Caco-2 (cell line): ENCODE measurements at regions of chr13 and their contacts with region 1.

Region 1: DNA sequence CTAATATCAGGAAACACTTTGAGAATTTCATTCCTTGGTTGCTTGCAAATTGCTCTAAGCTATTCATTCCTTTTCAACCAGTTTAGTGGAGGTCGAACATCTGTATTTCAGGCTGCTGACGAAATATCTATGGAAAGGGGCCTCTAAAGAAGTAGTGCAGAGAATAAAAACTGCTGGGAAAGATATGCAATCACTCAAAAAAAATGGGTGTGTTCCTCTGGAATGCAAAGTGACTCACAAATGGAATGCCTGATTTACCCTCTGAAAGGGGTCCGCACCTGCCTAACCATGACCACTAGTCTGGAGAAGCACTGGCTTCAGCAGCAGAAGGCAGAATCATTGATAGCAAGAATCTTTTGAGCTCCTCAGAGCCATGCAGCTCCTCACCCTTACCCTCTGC is 129.4 kb downstream of the PCDH9 start:
- DNase-seq: peak; percentile 42 to 58
- H3K4me3 ChIP-seq: no peak overlapping the region
- H3K4me3 Mint-ChIP-seq: peak overlapping the region; percentile 75
- H3K27ac Mint-ChIP-seq: peak overlapping the region; percentile 87
- H3K4me1 ChIP-seq: peaks cover 18% of the 10 kb centered on the region; the same call in 1 of the 2 replicates
- H3K4me1 Mint-ChIP-seq: peaks cover 13% of the 10 kb centered on the region
- H3K27me3 ChIP-seq: no peaks in the 10 kb centered on the region
- H3K27me3 Mint-ChIP-seq: no peaks in the 10 kb centered on the region
- CTCF ChIP-seq: no peak

Region 2: GRCh38 chr13:67075239-67075638 is 25.5 kb before region 1 on chr13:
- CTCF ChIA-PET with region 1: no interaction called
- POLR2A ChIA-PET with region 1: no interaction called
- intact Hi-C with region 1: loop called (anchors 1 kb)
- DNase-seq: no peak
- H3K4me3 ChIP-seq: no peak overlapping the region
- H3K4me3 Mint-ChIP-seq: no peak overlapping the region
- H3K27ac Mint-ChIP-seq: no peak overlapping the region
- H3K4me1 ChIP-seq: peaks cover 28% of the 10 kb centered on the region
- H3K4me1 Mint-ChIP-seq: peaks cover 23% of the 10 kb centered on the region
- H3K27me3 ChIP-seq: no peaks in the 10 kb centered on the region
- H3K27me3 Mint-ChIP-seq: no peaks in the 10 kb centered on the region
- CTCF ChIP-seq: peak in 1 of 2 experiments; percentile 26

Region 3: DNA sequence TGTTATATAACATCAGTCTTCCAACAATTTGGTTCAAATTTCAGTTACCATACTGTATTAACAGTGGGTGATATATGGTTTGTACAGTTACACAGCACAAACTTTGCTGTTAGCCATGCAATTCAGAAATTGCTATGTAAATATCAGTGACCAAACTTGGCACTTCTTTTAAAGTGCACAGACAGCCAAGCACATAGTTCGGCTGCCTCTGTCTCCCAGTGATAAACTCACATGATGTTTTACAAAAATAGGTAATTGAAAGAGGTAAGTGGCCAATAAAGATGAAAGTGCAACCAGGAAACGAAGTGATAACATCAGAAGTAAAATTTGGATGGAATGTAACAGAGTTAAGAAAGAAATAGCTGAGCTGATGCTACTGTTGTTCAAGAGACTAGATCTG is 14.5 kb before region 1 on chr13:
- CTCF ChIA-PET with region 1: no interaction called
- POLR2A ChIA-PET with region 1: no interaction called
- intact Hi-C with region 1: loop called (anchors 1 kb)
- DNase-seq: peak; percentile 14 to 36
- H3K4me3 ChIP-seq: no peak overlapping the region
- H3K4me3 Mint-ChIP-seq: no peak overlapping the region
- H3K27ac Mint-ChIP-seq: peak overlapping the region; percentile 14
- H3K4me1 ChIP-seq: peaks cover 35% of the 10 kb centered on the region
- H3K4me1 Mint-ChIP-seq: peaks cover 22% of the 10 kb centered on the region
- H3K27me3 ChIP-seq: no peaks in the 10 kb centered on the region
- H3K27me3 Mint-ChIP-seq: no peaks in the 10 kb centered on the region
- CTCF ChIP-seq: no peak